HEK293 (cell line): ENCODE measurements at regions of chr19 and their contacts with region 1.

Region 1: DNA sequence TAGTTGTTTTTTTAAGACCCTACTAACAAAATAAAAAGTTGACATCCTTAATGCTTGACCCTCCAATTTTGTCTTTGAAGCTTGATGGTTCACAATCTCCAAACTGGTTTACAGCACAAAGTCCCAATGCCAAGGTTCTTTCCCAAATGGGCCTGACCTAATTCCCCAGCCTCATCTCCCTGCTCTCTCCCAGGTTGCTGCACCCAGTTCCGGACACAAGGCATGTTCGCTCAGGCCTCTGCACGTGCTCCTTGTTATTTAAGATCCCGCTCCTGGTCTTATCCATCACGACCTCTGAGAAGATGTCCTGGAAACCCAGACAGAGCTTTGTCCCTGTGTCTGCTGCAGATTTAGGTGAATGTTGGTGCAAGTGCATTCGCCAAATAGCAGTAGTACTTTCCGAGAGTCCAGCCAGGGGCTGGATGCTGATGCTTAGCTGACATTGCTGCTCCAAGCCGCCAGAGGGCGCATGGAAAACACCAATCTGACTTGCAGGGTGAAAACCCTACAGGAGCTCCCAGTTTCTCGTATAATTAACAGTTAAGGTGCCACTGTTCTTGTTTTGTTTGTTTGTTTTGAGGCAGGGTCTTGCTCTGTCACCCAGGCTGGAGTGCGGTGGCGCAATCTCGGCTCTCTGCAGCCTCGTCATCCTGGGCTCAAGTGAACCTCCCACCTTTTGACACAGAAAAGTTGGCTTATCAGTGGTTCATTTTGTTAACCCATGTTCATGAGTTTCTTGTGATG is 18.5 kb downstream of the LYPD3 start:
- H3K4me3 ChIP-seq: no peak overlapping the region
- H3K27ac ChIP-seq: no peak overlapping the region
- H3K4me1 ChIP-seq: no peaks in the 10 kb centered on the region
- CTCF ChIP-seq: peak; percentile 97

Region 2: GRCh38 chr19:43351998-43352746 is 94.7 kb before region 1 on chr19:
- CTCF ChIA-PET with region 1: no interaction called
- POLR2A ChIA-PET with region 1: no interaction called
- H3K4me3 ChIP-seq: no peak overlapping the region
- H3K27ac ChIP-seq: no peak overlapping the region
- H3K4me1 ChIP-seq: peaks cover 3% of the 10 kb centered on the region; the same call in 1 of the 2 replicates
- CTCF ChIP-seq: no peak

Region 3: DNA sequence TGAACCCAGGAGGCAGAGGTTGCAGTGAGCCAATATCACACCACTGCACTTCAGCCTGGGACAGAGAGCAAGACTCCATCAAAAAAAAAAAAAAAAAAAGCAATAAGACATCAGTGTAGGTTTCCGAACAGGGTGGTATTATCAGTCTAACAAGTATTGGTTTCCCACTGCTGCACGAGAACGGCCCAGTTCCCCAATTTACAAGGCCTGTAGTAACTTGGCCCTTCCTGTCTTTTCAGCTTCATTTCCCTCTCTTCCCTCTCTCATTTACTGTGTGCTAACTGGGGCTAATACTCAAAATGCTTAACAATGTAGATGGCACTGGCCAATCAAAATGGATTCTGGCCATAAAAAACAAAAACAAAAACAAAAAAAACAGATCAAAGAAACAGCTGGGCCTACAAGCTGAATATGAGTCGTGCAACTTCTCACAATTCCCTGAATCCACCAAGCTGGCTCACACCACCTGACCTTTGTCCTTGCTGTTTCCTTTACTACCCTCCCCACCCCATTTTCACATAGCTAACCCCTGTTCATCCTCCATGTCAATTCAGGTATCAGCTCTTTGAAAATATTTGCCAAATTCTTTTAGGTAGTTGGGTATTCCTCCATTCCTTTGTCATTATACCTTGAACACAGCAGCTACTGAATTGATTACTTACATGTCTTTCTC is 29.8 kb before region 1 on chr19:
- CTCF ChIA-PET with region 1: interaction called, 10 read pairs
- POLR2A ChIA-PET with region 1: no interaction called
- H3K4me3 ChIP-seq: no peak overlapping the region
- H3K27ac ChIP-seq: no peak overlapping the region
- H3K4me1 ChIP-seq: no peaks in the 10 kb centered on the region
- CTCF ChIP-seq: no peak

Region 4: GRCh38 chr19:43474986-43475705 is 28.2 kb after region 1 on chr19:
- CTCF ChIA-PET with region 1: interaction called, 25 read pairs
- POLR2A ChIA-PET with region 1: no interaction called
- H3K4me3 ChIP-seq: peak overlapping the region; percentile 3
- H3K27ac ChIP-seq: 0 out of 2 replicates have a peak overlapping the region, but pooled peaks have one; percentile 45
- H3K4me1 ChIP-seq: peaks cover 7% of the 10 kb centered on the region
- CTCF ChIP-seq: no peak

Region 5: GRCh38 chr19:43519436-43520088 is 72.6 kb after region 1 on chr19:
- CTCF ChIA-PET with region 1: interaction called, 749 read pairs
- POLR2A ChIA-PET with region 1: interaction called, 18 read pairs
- H3K4me3 ChIP-seq: no peak overlapping the region
- H3K27ac ChIP-seq: no peak overlapping the region
- H3K4me1 ChIP-seq: peaks cover 3% of the 10 kb centered on the region; the same call in 1 of the 2 replicates
- CTCF ChIP-seq: peak; percentile 92

Region 6: DNA sequence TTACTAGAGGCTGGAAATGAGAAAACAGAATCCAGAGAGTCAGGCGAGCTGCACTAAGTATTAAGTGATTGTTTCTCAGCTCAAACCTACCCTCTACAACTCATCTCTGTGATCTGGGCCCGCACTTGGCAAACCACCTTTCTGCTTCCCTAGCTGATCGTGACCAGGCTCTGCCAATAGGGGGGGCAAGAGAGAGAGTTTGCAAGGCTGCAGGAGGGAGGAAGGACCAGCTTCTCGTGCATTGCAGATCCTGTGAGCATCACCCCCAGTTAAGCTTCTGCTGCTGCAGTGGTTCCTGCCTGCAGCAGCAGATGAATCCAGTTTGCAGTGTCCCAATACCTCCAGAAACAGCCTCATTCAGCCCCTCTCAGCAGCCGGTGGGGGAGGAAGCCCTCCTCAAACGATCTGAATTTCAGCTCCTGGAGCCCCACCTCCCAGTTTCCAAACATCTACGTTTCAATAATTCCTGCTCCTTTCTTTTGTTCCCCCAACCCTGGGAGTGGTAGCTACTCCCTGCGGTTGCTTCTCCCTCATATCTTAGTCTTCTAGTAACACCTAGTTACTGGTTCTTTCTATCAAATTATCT is 108.4 kb after region 1 on chr19:
- CTCF ChIA-PET with region 1: interaction called, 23 read pairs
- POLR2A ChIA-PET with region 1: no interaction called
- H3K4me3 ChIP-seq: no peak overlapping the region
- H3K27ac ChIP-seq: no peak overlapping the region
- H3K4me1 ChIP-seq: no peaks in the 10 kb centered on the region
- CTCF ChIP-seq: peak; percentile 84

Region 7: DNA sequence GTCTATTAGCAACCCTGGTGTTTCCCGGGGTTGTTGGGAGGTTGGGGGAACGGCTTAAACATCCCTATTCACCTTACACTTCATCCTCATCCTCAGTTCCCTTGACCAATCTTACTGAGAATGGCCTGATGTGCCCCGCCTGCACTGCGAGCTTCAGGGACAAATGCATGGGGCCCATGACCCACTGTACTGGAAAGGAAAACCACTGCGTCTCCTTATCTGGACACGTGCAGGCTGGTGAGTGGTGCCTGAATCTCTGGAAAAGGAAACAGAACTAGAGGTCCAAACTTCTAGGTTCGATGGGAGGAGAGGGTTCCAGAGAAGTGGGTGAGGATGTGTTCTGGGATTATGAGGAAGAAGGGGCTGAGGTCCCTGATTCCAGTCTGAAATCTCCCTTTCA is 134.5 kb after region 1 on chr19:
- CTCF ChIA-PET with region 1: no interaction called
- POLR2A ChIA-PET with region 1: no interaction called
- H3K4me3 ChIP-seq: no peak overlapping the region
- H3K27ac ChIP-seq: no peak overlapping the region
- H3K4me1 ChIP-seq: no peaks in the 10 kb centered on the region
- CTCF ChIP-seq: no peak

Region 8: DNA sequence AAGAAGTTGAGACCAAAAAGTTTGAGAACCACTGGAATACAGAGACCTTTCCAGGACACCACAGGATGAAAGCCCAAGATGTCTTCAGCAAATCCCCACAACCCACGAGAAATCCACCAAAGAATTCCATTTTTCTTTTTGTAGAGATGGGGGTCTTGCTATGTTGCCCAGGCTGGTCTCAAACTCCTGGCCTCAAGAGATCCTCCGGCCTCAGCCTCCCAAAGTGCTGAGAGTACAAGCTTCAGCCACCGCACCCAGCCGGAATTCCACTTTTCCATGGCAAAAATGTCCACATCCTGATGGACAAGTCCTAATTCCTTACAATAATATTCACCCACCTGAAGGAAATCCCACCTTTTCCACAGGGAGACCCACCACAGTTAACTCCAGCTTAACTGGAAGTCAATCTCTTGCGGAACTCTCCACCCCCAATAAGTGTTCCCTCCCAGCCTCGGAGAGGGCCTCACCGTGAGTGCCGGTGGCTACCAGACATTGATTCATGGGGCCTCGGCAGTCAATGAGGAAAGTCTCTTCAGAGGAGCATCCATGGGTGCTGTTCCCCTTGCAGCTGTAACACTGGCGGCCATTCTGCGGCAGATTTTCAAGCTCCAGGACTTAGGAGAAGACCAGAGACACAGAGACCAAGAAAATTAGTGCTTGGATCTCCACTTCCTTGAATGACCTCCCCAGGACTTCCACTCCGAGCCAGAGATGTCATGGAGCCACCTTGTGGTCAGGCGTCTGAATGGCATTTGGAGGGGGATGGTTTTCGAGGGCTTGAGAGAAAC is 205.0 kb after region 1 on chr19:
- CTCF ChIA-PET with region 1: interaction called, 23 read pairs
- POLR2A ChIA-PET with region 1: no interaction called
- H3K4me3 ChIP-seq: no peak overlapping the region
- H3K27ac ChIP-seq: 0 out of 2 replicates have a peak overlapping the region, but pooled peaks have one; percentile 1
- H3K4me1 ChIP-seq: peaks cover 3% of the 10 kb centered on the region
- CTCF ChIP-seq: peak; percentile 94